Activated CD4-positive, alpha-beta T cell treated with anti-CD3 and anti-CD28 coated beads for 36 hours (primary cell): ENCODE measurements at regions of chr15 and their contacts with region 1.

Region 1: DNA sequence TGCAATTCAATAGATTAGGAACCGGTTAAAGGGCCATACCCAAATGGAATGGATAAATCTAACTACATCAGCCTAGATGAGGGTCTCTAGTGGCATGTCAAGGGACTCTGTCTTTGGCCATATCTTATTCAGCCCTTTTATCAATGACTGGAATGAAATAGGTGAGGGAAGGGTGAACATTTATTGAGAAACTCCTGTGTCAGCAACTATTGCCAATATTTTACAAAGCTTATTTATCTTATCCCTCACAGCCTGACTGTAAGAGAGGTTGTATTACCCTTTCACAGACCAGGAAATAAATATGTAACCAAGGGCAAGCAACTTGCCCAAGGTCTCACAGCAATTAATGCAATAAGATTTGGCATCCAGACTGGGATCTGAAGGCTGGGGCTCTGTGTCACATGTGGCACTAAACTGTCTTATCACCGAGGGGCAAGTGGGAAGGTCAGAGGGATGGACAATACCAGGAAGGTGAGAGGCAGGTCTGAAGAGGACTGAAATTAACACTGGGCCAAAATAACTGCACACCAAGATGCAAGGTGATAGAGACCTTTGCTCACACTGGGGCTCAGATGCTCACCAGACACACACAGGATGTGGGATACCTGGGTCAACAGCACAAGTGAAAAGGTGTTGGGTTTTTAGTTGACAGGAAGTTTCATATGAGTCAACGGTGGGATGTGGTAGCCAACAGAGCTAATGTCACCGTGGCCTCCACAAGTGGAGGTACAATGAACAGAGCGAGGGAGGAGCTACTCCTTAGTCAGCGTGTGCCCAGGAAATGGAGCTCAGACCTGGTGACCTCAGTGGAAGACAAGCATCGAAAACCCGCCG is 261.3 kb downstream of the RPLP1 start:
- DNase-seq: peak; percentile 85
- ATAC-seq: peak; percentile 96
- H3K4me3 Mint-ChIP-seq: peak overlapping the region; percentile 21
- H3K27ac Mint-ChIP-seq: peak overlapping the region; percentile 85
- H3K4me1 Mint-ChIP-seq: peaks cover 60% of the 10 kb centered on the region
- H3K27me3 Mint-ChIP-seq: peaks cover 7% of the 10 kb centered on the region

Region 2: GRCh38 chr15:69468241-69469121 is 245.5 kb before region 1 on chr15:
- CTCF ChIA-PET with region 1: no interaction called
- POLR2A ChIA-PET with region 1: no interaction called
- intact Hi-C with region 1: loop called (anchors 1 to 10 kb)
- DNase-seq: peak; percentile 91
- ATAC-seq: peak; percentile 94
- H3K4me3 Mint-ChIP-seq: peak overlapping the region; percentile 59
- H3K27ac Mint-ChIP-seq: peak overlapping the region; percentile 85
- H3K4me1 Mint-ChIP-seq: peaks cover 27% of the 10 kb centered on the region
- H3K27me3 Mint-ChIP-seq: no peaks in the 10 kb centered on the region

Region 3: DNA sequence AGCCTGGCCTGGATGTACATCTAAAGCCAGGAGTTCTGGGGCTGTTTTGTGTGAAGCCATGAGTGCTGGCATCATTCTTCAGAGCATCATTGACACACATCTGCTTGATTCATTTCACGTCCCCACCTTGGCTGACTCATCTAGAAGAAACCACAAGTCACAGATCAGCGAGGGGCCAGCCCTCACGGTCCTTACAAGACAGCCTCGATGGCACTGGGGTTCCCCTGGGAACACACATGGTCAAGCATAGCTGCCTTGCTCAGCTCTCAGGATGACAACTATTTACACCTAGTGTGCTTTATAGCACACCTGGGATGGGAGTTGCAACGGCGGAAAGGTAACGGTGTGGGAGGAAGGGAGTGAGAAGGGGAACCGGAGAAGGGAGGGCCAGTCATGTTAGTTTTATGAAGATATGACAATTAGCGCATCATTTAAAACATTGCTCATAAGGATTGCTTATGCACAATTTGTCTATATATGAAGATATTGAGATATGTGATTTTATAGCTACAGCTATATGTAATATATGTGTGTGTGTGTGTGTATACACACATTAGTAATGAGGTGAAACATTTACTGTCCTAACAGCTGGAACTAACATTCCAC is 34.2 kb before region 1 on chr15:
- CTCF ChIA-PET with region 1: interaction called, 3 read pairs
- POLR2A ChIA-PET with region 1: interaction called, 3 read pairs
- intact Hi-C with region 1: loop called (anchors 1 to 2 kb)
- DNase-seq: peak; percentile 81
- ATAC-seq: peak; percentile 95
- H3K4me3 Mint-ChIP-seq: no peak overlapping the region
- H3K27ac Mint-ChIP-seq: peak overlapping the region; percentile 73
- H3K4me1 Mint-ChIP-seq: peaks cover 26% of the 10 kb centered on the region
- H3K27me3 Mint-ChIP-seq: peaks cover 10% of the 10 kb centered on the region

Region 4: DNA sequence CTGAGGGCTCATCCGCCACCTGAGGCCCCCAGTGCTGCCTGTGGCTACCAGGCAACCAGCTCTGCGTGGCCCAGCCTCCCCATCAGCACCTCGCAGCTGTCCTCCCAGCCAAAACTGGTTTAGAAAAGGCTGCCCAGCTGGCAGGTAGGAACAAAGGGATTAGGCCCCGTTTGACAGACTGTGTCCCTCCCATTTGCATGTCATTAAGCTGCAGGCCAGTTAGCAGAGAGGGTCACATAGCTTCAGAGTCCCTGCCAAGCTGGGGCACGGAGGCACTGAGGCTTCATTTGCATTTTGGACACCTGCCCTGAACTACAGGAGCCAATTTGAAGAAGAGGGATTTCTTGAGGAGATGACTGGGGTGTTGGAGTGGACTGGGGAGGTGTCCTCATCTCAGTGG is 205.9 kb after region 1 on chr15:
- CTCF ChIA-PET with region 1: no interaction called
- POLR2A ChIA-PET with region 1: no interaction called
- intact Hi-C with region 1: no loop called
- DNase-seq: no peak
- ATAC-seq: no peak
- H3K4me3 Mint-ChIP-seq: no peak overlapping the region
- H3K27ac Mint-ChIP-seq: no peak overlapping the region
- H3K4me1 Mint-ChIP-seq: no peaks in the 10 kb centered on the region
- H3K27me3 Mint-ChIP-seq: no peaks in the 10 kb centered on the region

Region 5: DNA sequence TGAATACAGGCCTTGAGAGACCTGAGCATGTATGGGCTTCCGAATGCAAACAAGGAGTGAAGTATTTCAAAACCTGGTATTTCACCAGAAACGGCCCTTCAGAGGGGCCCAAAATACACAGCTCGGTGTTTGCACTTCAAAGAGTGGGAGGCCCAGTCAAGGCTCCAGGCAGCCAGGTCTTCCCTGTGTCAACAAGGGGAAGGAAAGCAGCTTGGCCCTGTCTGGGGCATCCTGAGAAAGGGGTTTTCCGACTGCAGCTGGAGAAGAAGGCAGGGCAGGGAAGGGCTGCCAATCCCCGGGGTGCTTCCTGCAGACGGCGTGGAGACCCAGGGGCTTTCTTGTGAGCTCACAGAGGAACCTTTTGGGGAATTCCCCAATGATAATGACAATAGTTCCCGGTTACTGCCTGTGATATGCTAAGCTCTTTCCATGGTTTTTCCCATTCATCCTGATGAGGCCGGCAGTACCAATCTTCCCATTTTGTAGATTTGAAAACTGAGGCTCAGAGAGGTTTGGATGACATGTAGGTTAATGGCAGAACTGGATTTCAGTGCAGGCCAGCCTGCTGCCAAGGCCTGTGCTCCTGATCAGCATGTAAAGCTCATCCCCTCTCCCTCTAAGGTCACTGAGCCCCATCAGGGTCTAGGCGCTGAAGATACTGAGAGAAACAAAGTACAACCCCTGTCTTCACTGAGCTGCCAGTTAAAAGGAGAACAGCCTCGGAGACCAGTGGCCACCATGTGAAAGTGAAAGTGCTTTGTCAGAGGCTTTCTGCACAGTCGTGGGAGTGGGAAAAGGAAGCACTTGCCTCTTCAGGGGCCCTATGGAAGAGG is 426.8 kb after region 1 on chr15:
- CTCF ChIA-PET with region 1: interaction called, 4 read pairs
- POLR2A ChIA-PET with region 1: interaction called, 3 read pairs
- intact Hi-C with region 1: loop called in 1 of 2 experiments (anchors 5 kb)
- DNase-seq: peak; percentile 55
- ATAC-seq: peak; percentile 32
- H3K4me3 Mint-ChIP-seq: peak overlapping the region; percentile 8
- H3K27ac Mint-ChIP-seq: peak overlapping the region; percentile 40
- H3K4me1 Mint-ChIP-seq: peaks cover 34% of the 10 kb centered on the region
- H3K27me3 Mint-ChIP-seq: peaks cover 21% of the 10 kb centered on the region